Vagina (tissue), 2 donors: ENCODE measurements at regions of chr4 and their contacts with region 1.

Region 1: GRCh38 chr4:3292571-3293400 is at the start of gene RGS12:
- DNase-seq: peak in 1 of 2 donors; percentile 96
- H3K4me3 ChIP-seq: peak within 1 kb of the TSS; percentile 77 to 97
- H3K27ac ChIP-seq: peak within 1 kb of the TSS; percentile 92
- H3K4me1 ChIP-seq: peaks cover 34% of the 10 kb centered on the region
- H3K27me3 ChIP-seq: no peaks in the 10 kb centered on the region
- CTCF ChIP-seq: no peak
- POLR2A ChIP-seq: peak in 1 of 2 donors; percentile 88
- total RNA-seq, gene RGS12: 64.8 TPM

Region 2: GRCh38 chr4:3054169-3054759 is 238.5 kb before region 1 on chr4:
- intact Hi-C with region 1: no loop called
- DNase-seq: no peak
- H3K4me3 ChIP-seq: no peak overlapping the region
- H3K27ac ChIP-seq: no peak overlapping the region
- H3K4me1 ChIP-seq: no peaks in the 10 kb centered on the region
- H3K27me3 ChIP-seq: no peaks in the 10 kb centered on the region
- CTCF ChIP-seq: no peak
- POLR2A ChIP-seq: no peak

Region 3: DNA sequence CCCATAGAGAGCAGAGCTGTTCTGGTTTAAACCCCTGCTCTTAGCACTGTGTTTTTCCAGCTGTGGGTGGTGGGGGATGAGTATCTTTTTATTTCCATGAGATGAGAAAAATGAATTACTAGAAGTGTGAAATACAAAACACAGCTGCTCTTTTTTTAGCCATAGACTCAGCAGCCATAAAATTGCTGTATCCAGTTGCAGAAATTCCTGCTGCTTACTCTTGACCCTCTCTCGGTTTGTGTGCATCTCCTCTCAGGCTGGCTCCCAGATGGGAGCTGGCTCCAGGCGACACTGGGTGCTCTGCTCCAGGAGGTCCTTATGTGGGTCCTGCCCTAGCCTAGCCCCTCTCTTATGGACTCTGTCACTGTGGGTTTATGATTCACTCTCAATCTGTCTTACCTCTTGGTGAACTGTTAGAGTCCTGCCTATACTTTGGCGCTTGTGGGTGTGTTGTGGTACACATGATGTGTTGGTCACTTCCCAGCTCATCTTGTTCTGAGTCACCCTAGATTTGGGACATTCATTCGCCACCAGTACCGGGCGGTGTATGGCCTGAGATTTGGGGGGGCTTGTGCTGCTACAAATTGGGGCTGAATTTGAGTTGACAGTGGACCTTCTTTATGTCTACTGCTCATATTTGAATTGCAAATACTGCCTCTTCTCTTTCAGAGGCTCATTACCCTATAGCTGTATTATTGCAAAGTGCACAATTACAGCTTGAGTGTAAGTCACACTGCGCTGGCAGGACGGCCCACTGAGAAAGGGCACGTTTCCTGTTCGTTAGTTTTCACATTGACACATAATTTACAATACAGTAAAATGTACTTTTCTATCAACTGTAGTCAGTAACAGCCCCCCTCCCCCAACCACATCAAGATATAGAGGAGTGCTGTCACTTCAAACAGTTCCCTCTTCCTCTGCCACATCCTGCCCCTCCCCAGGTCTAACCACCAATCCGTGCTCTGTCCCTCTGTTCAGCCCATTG is 90.8 kb before region 1 on chr4:
- intact Hi-C with region 1: loop called (anchors 10 kb)
- DNase-seq: no peak
- H3K4me3 ChIP-seq: no peak overlapping the region
- H3K27ac ChIP-seq: peak overlapping the region; percentile 51
- H3K4me1 ChIP-seq: peaks cover 35% of the 10 kb centered on the region
- H3K27me3 ChIP-seq: no peaks in the 10 kb centered on the region
- CTCF ChIP-seq: no peak
- POLR2A ChIP-seq: no peak

Region 4: DNA sequence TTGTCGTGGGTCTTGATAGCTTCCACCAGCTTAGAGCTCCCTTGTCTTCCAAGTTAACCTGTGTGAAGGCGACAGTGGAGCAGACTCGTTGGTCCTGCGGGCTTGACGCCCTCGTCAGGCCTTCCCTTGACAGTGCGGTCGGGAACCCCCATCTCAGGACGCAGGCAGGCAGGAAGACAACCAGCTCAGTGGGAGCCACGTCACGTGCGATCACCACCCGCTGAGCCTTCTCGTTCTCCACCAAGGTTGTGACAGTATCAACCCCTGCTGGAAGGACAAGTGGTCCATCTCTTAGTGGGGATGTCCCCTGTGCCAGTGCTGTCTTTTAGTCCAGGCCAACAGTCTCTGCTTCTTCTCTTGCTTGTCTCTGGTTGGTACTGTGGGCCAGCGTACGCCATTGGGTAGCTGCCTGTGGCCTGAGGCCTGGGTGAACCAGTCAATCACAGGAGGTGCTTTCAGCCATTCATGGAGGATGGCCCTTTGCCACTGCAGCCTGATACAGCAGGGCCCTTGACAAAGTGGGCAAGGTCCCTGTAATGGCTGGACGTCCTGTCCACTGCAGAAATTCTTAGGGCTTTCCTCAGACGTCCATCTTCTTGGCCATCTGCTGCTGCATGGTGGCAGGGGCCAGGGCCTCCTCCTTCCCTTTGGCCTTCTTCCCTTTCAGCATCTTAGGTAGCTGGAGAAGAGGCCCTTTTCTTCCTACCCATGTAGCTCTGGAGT is 31.5 kb after region 1 on chr4:
- intact Hi-C with region 1: no loop called
- DNase-seq: peak; percentile 70 to 77
- H3K4me3 ChIP-seq: no peak overlapping the region
- H3K27ac ChIP-seq: no peak overlapping the region
- H3K4me1 ChIP-seq: peaks cover 20% of the 10 kb centered on the region
- H3K27me3 ChIP-seq: no peaks in the 10 kb centered on the region
- CTCF ChIP-seq: no peak
- POLR2A ChIP-seq: no peak